Right cardiac atrium (tissue), 5 donors: ENCODE measurements at regions of chr14 and their contacts with region 1.

Region 1: GRCh38 chr14:37874429-37875191 is 279.2 kb downstream of the TTC6 start:
- DNase-seq: peak; percentile 81 to 91 (median 89)
- ATAC-seq: peak; percentile 82 to 93
- H3K4me3 ChIP-seq: no peak overlapping the region
- H3K27ac ChIP-seq: no peak overlapping the region
- H3K4me1 ChIP-seq: no peaks in the 10 kb centered on the region
- H3K27me3 ChIP-seq: no peaks in the 10 kb centered on the region

Region 2: DNA sequence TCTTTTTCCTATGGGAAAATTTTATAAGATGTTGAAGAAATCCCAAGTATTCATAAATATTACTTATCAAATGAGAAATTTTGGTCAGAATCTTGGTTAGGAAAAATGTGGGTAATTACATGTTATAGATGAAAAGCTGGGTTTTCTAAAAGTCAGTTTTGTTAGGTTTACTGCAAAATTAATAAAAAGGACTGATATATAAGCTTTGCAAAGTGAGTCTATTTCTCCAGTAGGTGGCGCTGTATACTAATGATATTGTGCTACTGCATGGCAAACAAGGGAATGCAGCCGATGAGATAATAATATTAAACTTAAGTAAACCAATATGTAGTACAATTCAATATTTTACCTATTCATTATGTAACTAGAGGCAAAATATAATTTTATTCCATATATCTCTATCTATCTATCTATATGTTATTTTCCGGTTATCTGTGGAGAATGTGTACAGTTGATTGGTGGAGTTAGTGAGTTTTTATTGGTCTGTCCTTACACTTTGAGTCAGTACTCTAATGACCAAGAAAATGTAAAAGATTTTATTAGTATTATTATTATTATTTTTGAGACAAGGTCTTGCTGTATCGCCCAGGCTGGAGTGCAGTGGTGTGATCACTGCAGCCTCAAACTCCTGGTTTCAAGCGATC is 643.9 kb before region 1 on chr14:
- intact Hi-C with region 1: loop called in 1 of 4 experiments (anchors 10 kb)
- DNase-seq: no peak
- ATAC-seq: peak in 1 of 2 donors; percentile 46
- H3K4me3 ChIP-seq: no peak overlapping the region
- H3K27ac ChIP-seq: no peak overlapping the region
- H3K4me1 ChIP-seq: no peaks in the 10 kb centered on the region
- H3K27me3 ChIP-seq: no peaks in the 10 kb centered on the region

Region 3: GRCh38 chr14:37241198-37241597 is 633.4 kb before region 1 on chr14:
- intact Hi-C with region 1: loop called in 2 of 4 experiments (anchors 5 to 10 kb)
- DNase-seq: no peak
- ATAC-seq: no peak
- H3K4me3 ChIP-seq: no peak overlapping the region
- H3K27ac ChIP-seq: no peak overlapping the region
- H3K4me1 ChIP-seq: no peaks in the 10 kb centered on the region
- H3K27me3 ChIP-seq: no peaks in the 10 kb centered on the region

Region 4: DNA sequence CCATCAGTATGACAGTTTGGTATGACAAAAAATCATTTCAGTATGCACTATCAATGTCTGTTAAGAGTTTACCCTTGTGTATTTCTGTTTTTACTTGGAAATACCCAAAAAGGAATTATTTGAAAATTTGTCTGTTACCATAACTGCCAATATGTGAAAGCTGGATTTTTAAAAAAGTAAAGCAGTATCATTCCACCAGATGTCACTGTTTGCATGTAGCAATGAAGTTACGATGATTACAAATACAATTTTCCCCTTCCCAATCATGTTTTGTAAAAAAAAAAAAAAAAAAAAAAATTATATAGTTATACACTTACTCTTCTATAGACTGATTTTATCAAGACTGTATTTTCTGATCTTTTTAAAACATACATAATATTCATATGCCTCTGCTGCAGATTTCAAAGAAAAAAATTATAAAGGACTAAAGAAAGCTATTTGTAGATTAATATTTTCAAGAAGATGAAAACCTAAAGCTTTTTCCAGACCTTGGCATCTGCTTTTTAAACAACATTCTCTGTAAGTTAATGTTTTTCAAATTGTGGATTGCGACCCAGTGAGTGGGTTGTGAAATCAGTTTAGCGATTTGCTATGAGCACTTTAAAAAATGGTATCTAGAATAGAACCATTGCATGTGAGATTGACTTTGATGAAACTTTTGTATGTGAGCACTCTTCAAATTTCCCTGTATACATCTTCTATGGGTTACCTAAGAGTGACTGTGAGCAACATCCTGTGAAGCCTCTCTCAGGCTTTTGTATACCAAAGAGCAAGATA is 165.0 kb before region 1 on chr14:
- intact Hi-C with region 1: loop called (anchors 2 to 10 kb)
- DNase-seq: no peak
- ATAC-seq: no peak
- H3K4me3 ChIP-seq: no peak overlapping the region
- H3K27ac ChIP-seq: no peak overlapping the region
- H3K4me1 ChIP-seq: no peaks in the 10 kb centered on the region
- H3K27me3 ChIP-seq: no peaks in the 10 kb centered on the region

Region 5: DNA sequence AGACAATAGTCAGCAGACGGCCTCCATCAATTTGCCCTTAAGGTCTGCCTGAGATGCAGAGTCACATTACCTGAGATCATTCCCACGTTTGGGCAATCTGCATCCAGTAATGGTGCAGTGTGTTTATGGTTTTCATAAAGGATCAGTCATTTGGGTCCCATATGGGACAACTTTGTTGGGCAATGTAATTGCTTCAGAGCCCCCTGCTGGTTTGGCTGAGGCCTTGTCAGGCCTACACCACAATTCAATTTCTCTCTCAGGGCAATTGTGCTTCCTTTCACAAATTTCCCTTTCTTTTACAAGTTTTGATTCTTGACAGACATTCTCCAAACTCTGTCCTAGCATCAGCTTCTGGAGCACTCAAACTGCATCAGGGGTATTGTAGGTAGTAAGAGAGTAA is 141.9 kb after region 1 on chr14:
- intact Hi-C with region 1: no loop called
- DNase-seq: no peak
- ATAC-seq: no peak
- H3K4me3 ChIP-seq: no peak overlapping the region
- H3K27ac ChIP-seq: no peak overlapping the region
- H3K4me1 ChIP-seq: no peaks in the 10 kb centered on the region
- H3K27me3 ChIP-seq: no peaks in the 10 kb centered on the region